B cell (primary cell): ENCODE measurements at regions of chr11 and their contacts with region 1.

Region 1: DNA sequence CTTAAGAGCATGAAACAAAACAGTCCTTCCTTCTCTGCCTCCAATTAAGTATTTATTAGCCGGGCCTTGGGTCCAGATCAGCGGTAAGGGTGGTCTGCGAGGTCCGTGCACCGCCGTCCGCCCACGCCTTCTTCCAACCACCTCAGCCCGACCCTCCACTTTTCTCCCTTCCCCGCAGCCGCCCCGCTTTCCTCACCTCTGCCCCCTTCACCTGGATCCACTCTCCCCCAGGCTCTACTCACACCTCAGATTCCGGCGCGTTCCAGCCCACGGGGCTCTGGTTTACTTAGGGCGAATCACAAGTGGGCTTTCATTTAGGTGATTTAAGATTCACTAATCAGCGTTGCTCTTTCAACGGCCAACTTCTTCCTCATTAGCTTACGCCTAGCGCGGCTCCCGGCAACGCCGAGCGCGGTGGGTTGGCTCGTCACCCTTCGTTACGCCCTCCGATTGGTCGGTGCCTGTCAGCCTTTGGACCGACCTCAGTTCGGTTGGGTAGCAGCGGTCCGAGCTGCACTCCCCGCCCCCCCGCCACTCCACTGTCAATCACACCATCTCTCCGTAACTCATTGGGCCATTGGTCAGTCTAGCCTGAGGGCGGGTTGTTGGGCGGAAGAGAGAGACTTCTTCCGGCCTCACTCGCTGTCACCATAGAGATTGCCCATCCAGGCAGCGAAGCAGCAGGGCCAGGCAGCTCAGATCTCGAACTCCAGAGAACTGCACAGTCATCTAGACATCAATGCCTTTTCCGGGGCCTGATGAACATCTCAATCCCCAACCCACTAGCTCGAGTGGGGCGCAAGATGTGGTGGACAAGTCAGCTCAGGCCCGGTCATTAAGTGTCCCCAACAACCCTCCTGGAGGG is at the start of gene TMEM218:
- DNase-seq: peak; percentile 100
- ATAC-seq: peak; percentile 95
- H3K4me3 ChIP-seq: peak within 1 kb of the TSS; percentile 66 to 94 (median 80)
- H3K4me3 Mint-ChIP-seq: peak within 1 kb of the TSS; percentile 98
- H3K27ac ChIP-seq: peak within 1 kb of the TSS; percentile 79
- H3K27ac Mint-ChIP-seq: peak within 1 kb of the TSS; percentile 99
- H3K4me1 ChIP-seq: peaks cover 8 to 14% of the 10 kb centered on the region in 2 donors
- H3K4me1 Mint-ChIP-seq: peaks cover 20% of the 10 kb centered on the region
- H3K27me3 ChIP-seq: peaks cover 0 to 2% (median under 1%) of the 10 kb centered on the region in 4 experiments
- H3K27me3 Mint-ChIP-seq: peaks cover under 1% of the 10 kb centered on the region
- CTCF ChIP-seq: no peak
- total RNA-seq, gene TMEM218: 20.7 TPM in 2 replicates

Region 2: GRCh38 chr11:124622531-124623451 is 488.8 kb before region 1 on chr11 and contains the start of gene TBRG1:
- CTCF ChIA-PET with region 1: no interaction called
- POLR2A ChIA-PET with region 1: no interaction called
- intact Hi-C with region 1: loop called (anchors 1 kb)
- DNase-seq: peak; percentile 89
- ATAC-seq: peak; percentile 97
- H3K4me3 ChIP-seq: peak within 1 kb of the TSS; percentile 75 to 98 (median 91)
- H3K4me3 Mint-ChIP-seq: peak within 1 kb of the TSS; percentile 99
- H3K27ac ChIP-seq: peak within 1 kb of the TSS; percentile 71 to 95
- H3K27ac Mint-ChIP-seq: peak within 1 kb of the TSS; percentile 97
- H3K4me1 ChIP-seq: peaks cover 15 to 17% of the 10 kb centered on the region in 2 donors
- H3K4me1 Mint-ChIP-seq: peaks cover 31% of the 10 kb centered on the region
- H3K27me3 ChIP-seq: peaks cover 0 to 13% (median 3%) of the 10 kb centered on the region in 4 experiments
- H3K27me3 Mint-ChIP-seq: peaks cover 24% of the 10 kb centered on the region
- CTCF ChIP-seq: no peak
- total RNA-seq, gene TBRG1: 66.8 and 71.5 TPM in 2 replicates

Region 3: DNA sequence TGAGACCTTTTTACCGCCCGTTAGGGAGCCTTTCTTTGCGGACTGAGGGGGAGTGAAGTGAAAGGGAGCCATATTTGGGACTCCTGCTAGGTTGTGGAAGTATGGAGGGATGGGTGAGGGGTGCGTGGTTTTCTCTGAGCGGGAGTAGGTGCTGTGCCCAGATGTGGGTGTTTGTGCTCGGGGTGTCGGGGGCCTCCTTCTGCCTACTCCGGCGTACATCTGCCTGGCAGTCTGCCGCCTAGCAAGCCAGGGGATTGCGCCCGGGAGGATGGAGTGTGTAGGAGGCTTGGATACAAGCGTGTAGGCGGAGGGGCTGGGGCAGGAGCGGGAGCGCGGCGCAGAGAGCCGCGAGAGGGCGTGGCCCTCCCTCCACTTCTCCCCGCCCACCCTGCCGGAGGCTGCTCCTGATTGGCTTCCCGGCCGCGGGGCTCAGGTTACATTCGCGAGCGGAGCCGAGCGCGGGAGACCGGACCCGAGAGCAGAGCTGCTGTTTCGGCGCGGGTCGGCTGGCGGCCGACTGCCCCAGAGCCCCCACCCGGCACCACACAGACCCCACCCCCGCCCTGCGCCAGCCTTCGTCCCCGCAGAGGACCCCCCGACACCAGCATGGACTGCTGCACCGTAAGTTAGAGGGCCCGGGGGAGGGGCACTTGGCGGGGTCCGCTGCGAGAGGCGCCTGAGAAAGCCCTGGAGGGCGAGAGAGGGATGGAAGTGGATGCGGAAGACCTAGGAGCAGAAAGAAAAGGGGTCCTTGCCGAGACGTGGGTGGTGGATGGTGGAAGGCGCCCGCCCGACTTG is 371.9 kb before region 1 on chr11 and contains the start of gene NRGN:
- CTCF ChIA-PET with region 1: no interaction called
- POLR2A ChIA-PET with region 1: no interaction called
- intact Hi-C with region 1: loop called (anchors 1 kb)
- DNase-seq: peak; percentile 84
- ATAC-seq: peak; percentile 96
- H3K4me3 ChIP-seq: peak within 1 kb of the TSS; percentile 44 to 68 (median 62)
- H3K4me3 Mint-ChIP-seq: peak within 1 kb of the TSS; percentile 92
- H3K27ac ChIP-seq: no peak within 1 kb of the TSS
- H3K27ac Mint-ChIP-seq: peak within 1 kb of the TSS; percentile 60
- H3K4me1 ChIP-seq: peaks cover 8 to 17% of the 10 kb centered on the region in 2 donors
- H3K4me1 Mint-ChIP-seq: peaks cover 16% of the 10 kb centered on the region
- H3K27me3 ChIP-seq: peaks cover 0 to 13% (median 2%) of the 10 kb centered on the region in 4 experiments
- H3K27me3 Mint-ChIP-seq: no peaks in the 10 kb centered on the region
- CTCF ChIP-seq: no peak
- total RNA-seq, gene NRGN: 0.66 TPM in 1 of 2 replicates, not detected in the other

Region 4: DNA sequence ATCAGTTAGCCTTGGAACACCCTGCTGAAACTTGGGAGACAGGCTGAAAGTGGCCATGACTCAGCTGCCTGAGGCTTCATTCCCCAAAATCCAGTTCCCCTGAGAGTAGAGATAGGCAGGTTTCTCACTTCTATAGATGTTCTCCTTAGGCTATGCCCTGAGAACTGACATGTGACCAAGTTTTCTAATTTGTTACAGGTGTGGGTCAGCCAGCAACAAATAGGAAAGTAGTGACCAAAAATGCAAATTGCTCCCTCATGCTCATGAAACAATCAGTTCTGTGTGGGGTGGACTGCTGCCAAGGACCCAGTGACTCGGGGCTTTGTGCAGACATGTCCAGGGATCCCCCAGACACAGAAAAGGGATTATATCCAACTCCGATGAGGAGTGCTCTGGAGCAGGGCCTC is 164.8 kb before region 1 on chr11:
- CTCF ChIA-PET with region 1: no interaction called
- POLR2A ChIA-PET with region 1: no interaction called
- intact Hi-C with region 1: no loop called
- DNase-seq: no peak
- ATAC-seq: no peak
- H3K4me3 ChIP-seq: no peak overlapping the region
- H3K4me3 Mint-ChIP-seq: no peak overlapping the region
- H3K27ac ChIP-seq: no peak overlapping the region
- H3K27ac Mint-ChIP-seq: no peak overlapping the region
- H3K4me1 ChIP-seq: no peaks in the 10 kb centered on the region
- H3K4me1 Mint-ChIP-seq: no peaks in the 10 kb centered on the region
- H3K27me3 ChIP-seq: peaks cover 0 to 11% (median 9%) of the 10 kb centered on the region in 4 experiments
- H3K27me3 Mint-ChIP-seq: peaks cover 26% of the 10 kb centered on the region
- CTCF ChIP-seq: no peak

Region 5: GRCh38 chr11:125049164-125049792 is 62.3 kb before region 1 on chr11:
- CTCF ChIA-PET with region 1: no interaction called
- POLR2A ChIA-PET with region 1: no interaction called
- intact Hi-C with region 1: no loop called
- DNase-seq: no peak
- ATAC-seq: no peak
- H3K4me3 ChIP-seq: no peak overlapping the region
- H3K4me3 Mint-ChIP-seq: no peak overlapping the region
- H3K27ac ChIP-seq: no peak overlapping the region
- H3K27ac Mint-ChIP-seq: no peak overlapping the region
- H3K4me1 ChIP-seq: no peaks in the 10 kb centered on the region
- H3K4me1 Mint-ChIP-seq: no peaks in the 10 kb centered on the region
- H3K27me3 ChIP-seq: no peaks in the 10 kb centered on the region
- H3K27me3 Mint-ChIP-seq: no peaks in the 10 kb centered on the region
- CTCF ChIP-seq: no peak

Region 6: DNA sequence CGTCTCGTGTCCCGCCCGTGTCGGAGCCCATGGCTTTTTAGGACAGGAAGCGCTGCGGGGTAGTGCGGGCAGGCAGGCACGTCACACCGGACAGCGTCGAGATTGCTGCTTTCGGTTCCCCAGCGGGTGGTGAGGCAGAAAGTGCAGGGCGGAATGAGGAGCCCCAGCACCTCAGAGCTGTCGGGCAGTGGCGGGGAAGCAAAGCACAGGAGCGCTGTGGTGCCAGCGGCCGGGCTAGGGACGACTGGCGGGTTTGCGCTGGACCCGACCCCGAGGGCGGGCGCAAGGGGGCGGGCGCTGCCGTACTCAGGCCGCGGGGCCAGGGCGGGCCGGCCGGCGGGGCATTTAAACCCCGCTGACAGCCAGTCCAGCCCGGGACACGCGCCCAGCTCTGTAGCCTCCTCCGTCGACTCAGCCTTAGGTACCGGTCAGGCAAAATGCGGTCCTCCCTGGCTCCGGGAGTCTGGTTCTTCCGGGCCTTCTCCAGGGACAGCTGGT is 48.6 kb before region 1 on chr11 and contains the start of gene SLC37A2:
- CTCF ChIA-PET with region 1: interaction called, 4 read pairs
- POLR2A ChIA-PET with region 1: interaction called, 12 read pairs
- intact Hi-C with region 1: loop called (anchors 1 kb)
- DNase-seq: peak; percentile 89
- ATAC-seq: peak; percentile 93
- H3K4me3 ChIP-seq: peak within 1 kb of the TSS in 4 of 5 experiments; percentile 53 to 81 (median 73)
- H3K4me3 Mint-ChIP-seq: peak within 1 kb of the TSS; percentile 94
- H3K27ac ChIP-seq: peak within 1 kb of the TSS; percentile 38 to 81
- H3K27ac Mint-ChIP-seq: peak within 1 kb of the TSS; percentile 92
- H3K4me1 ChIP-seq: peaks cover 6 to 18% of the 10 kb centered on the region in 2 donors
- H3K4me1 Mint-ChIP-seq: peaks cover 16% of the 10 kb centered on the region
- H3K27me3 ChIP-seq: peaks cover 0 to 17% (median 4%) of the 10 kb centered on the region in 4 experiments
- H3K27me3 Mint-ChIP-seq: no peaks in the 10 kb centered on the region
- CTCF ChIP-seq: no peak
- total RNA-seq, gene SLC37A2: 27.0 and 27.1 TPM in 2 replicates

Region 7: DNA sequence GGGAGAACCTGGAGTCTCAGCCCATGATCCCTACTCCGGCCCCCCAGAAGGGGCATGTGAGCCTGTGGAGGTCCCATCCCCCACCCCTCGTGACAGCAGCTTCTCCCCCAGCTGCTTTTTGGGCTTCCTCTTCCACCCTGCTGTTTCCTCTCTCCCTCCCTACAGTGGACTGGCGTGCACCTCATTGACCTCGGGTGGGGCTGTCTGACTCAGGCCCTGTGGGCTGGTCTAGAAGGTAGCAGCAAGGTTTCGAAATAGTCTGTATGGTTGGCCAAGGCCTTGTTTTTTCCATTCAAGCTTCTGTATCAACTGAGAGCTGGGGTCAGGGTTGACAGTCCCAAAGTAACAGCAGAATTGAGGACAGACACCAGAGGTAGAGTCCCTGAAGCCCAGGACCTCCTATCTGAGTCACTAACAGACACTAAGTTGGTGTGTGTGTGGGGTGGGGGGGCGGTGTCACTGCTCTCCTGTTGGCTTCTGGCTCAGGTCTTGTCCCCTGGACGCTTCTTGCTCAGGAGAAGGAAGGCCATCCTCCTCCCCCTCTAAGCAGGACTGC is 40.8 kb before region 1 on chr11:
- CTCF ChIA-PET with region 1: interaction called, 4 read pairs
- POLR2A ChIA-PET with region 1: interaction called, 4 read pairs
- intact Hi-C with region 1: loop called (anchors 1 kb)
- DNase-seq: peak; percentile 74
- ATAC-seq: peak; percentile 74
- H3K4me3 ChIP-seq: peak overlapping the region in 1 of 5 experiments; percentile 10
- H3K4me3 Mint-ChIP-seq: peak overlapping the region; percentile 64
- H3K27ac ChIP-seq: peak overlapping the region; percentile 61 to 66
- H3K27ac Mint-ChIP-seq: peak overlapping the region; percentile 89
- H3K4me1 ChIP-seq: peaks cover 47 to 59% of the 10 kb centered on the region in 2 donors
- H3K4me1 Mint-ChIP-seq: peaks cover 59% of the 10 kb centered on the region
- H3K27me3 ChIP-seq: no peaks in the 10 kb centered on the region
- H3K27me3 Mint-ChIP-seq: no peaks in the 10 kb centered on the region
- CTCF ChIP-seq: no peak

Region 8: GRCh38 chr11:125123947-125124617 is 12.5 kb after region 1 on chr11:
- CTCF ChIA-PET with region 1: interaction called, 29 read pairs
- POLR2A ChIA-PET with region 1: interaction called, 3 read pairs
- intact Hi-C with region 1: loop called (anchors 1 kb)
- DNase-seq: peak; percentile 60
- ATAC-seq: peak; percentile 68
- H3K4me3 ChIP-seq: no peak overlapping the region
- H3K4me3 Mint-ChIP-seq: peak overlapping the region; percentile 69
- H3K27ac ChIP-seq: no peak overlapping the region
- H3K27ac Mint-ChIP-seq: no peak overlapping the region
- H3K4me1 ChIP-seq: peaks cover 9 to 12% of the 10 kb centered on the region in 2 donors
- H3K4me1 Mint-ChIP-seq: peaks cover 13% of the 10 kb centered on the region
- H3K27me3 ChIP-seq: peaks cover 0 to 35% (median 7%) of the 10 kb centered on the region in 4 experiments
- H3K27me3 Mint-ChIP-seq: peaks cover 54% of the 10 kb centered on the region
- CTCF ChIP-seq: peak; percentile 55

Region 9: GRCh38 chr11:125141686-125142535 is 30.3 kb after region 1 on chr11:
- CTCF ChIA-PET with region 1: interaction called, 10 read pairs
- POLR2A ChIA-PET with region 1: no interaction called
- intact Hi-C with region 1: no loop called
- DNase-seq: peak; percentile 73
- ATAC-seq: peak; percentile 99
- H3K4me3 ChIP-seq: no peak overlapping the region
- H3K4me3 Mint-ChIP-seq: no peak overlapping the region
- H3K27ac ChIP-seq: no peak overlapping the region
- H3K27ac Mint-ChIP-seq: no peak overlapping the region
- H3K4me1 ChIP-seq: peaks cover 3 to 6% of the 10 kb centered on the region in 2 donors
- H3K4me1 Mint-ChIP-seq: peaks cover 4% of the 10 kb centered on the region
- H3K27me3 ChIP-seq: peaks cover 0 to 15% (median 9%) of the 10 kb centered on the region in 4 experiments
- H3K27me3 Mint-ChIP-seq: peaks cover 54% of the 10 kb centered on the region
- CTCF ChIP-seq: peak; percentile 100